ENCODE measurements at regions of chrX and their contacts with region 1.

Region 1: GRCh38 chrX:30504309-30504708 is 73.3 kb downstream of the TASL start:
- DNase-seq: no peak
- ATAC-seq: no peak
- H3K4me3 ChIP-seq: no peak overlapping the region
- H3K27ac ChIP-seq: no peak overlapping the region
- H3K4me1 ChIP-seq: no peaks in the 10 kb centered on the region
- H3K27me3 ChIP-seq: no peaks in the 10 kb centered on the region

Region 2: GRCh38 chrX:30141966-30142365 is 362.3 kb before region 1 on chrX:
- intact Hi-C with region 1: loop called in 1 of 2 experiments (anchors 5 kb)
- DNase-seq: no peak
- ATAC-seq: no peak
- H3K4me3 ChIP-seq: no peak overlapping the region
- H3K27ac ChIP-seq: no peak overlapping the region
- H3K4me1 ChIP-seq: no peaks in the 10 kb centered on the region
- H3K27me3 ChIP-seq: no peaks in the 10 kb centered on the region

Region 3: GRCh38 chrX:30275498-30275897 is 228.8 kb before region 1 on chrX:
- intact Hi-C with region 1: loop called (anchors 5 kb)
- DNase-seq: no peak
- ATAC-seq: no peak
- H3K4me3 ChIP-seq: no peak overlapping the region
- H3K27ac ChIP-seq: no peak overlapping the region
- H3K4me1 ChIP-seq: no peaks in the 10 kb centered on the region
- H3K27me3 ChIP-seq: no peaks in the 10 kb centered on the region

Region 4: GRCh38 chrX:30343203-30343602 is 161.1 kb before region 1 on chrX:
- intact Hi-C with region 1: no loop called
- DNase-seq: no peak
- ATAC-seq: no peak
- H3K4me3 ChIP-seq: no peak overlapping the region
- H3K27ac ChIP-seq: no peak overlapping the region
- H3K4me1 ChIP-seq: no peaks in the 10 kb centered on the region
- H3K27me3 ChIP-seq: no peaks in the 10 kb centered on the region

Measured in aorta (tissue), 5 donors.